CD8-positive, alpha-beta T cell (primary cell): ENCODE measurements at regions of chr10 and their contacts with region 1.

Region 1: GRCh38 chr10:79068562-79069324 is at the start of gene ZMIZ1:
- DNase-seq: peak; percentile 61 to 87 (median 80)
- ATAC-seq: peak; percentile 60
- H3K4me3 ChIP-seq: peak within 1 kb of the TSS; percentile 83 to 94
- H3K4me3 Mint-ChIP-seq: peak within 1 kb of the TSS; percentile 94
- H3K27ac ChIP-seq: peak within 1 kb of the TSS; percentile 36 to 44
- H3K27ac Mint-ChIP-seq: peak within 1 kb of the TSS; percentile 85
- H3K4me1 ChIP-seq: peaks cover 36% of the 10 kb centered on the region
- H3K4me1 Mint-ChIP-seq: peaks cover 48% of the 10 kb centered on the region
- H3K27me3 ChIP-seq: no peaks in the 10 kb centered on the region
- H3K27me3 Mint-ChIP-seq: no peaks in the 10 kb centered on the region
- CTCF ChIP-seq: no peak
- total RNA-seq, gene ZMIZ1: 10.1 to 10.8 TPM

Region 2: DNA sequence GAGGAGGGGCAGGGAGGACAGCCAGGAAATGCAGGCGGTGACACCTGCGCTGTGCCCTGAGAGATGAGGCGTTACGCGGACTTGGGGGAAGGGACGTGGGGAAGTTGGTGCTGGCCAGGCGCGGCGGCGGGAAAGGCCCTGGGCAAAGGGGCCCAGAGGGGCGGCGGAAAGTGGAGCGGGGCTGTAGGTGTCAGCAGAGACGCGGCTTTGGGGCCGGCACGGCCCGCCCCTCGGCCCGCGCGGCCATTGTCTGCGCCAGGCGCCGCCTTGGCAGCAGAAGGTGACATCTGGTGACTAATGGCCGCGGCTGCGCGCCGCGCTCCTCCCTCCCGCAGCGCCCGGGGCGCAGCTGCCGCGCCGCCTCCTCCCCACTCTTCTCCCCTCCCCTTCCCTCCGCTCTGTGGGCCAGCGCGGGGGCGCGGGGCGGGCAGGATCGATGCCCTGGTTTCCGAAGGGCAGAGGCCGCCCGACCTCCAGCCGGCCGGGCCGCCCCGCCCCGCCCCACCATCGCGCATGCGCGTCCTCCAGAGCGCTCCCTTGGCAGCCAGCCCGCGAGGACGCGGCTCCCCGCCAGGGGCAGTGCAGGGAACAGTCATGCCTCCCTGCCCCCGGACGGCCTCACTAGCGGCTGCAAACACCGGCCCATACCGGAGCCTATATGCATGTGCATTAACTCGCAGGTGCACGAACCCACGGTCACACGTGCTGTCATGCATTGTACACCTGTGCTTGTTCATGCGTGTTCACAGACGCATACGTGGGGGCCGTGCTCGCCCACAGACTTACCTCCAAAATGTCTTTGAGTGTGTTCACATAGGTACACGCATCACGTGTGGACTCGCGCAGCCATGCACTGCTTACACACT is 765.5 kb before region 1 on chr10:
- CTCF ChIA-PET with region 1: no interaction called
- POLR2A ChIA-PET with region 1: no interaction called
- intact Hi-C with region 1: loop called (anchors 1 to 2 kb)
- DNase-seq: peak; percentile 94 to 99 (median 96)
- ATAC-seq: peak; percentile 92
- H3K4me3 ChIP-seq: peak overlapping the region; percentile 73 to 82
- H3K4me3 Mint-ChIP-seq: peak overlapping the region; percentile 97
- H3K27ac ChIP-seq: peak overlapping the region; percentile 76 to 92
- H3K27ac Mint-ChIP-seq: peak overlapping the region; percentile 97
- H3K4me1 ChIP-seq: peaks cover 17% of the 10 kb centered on the region
- H3K4me1 Mint-ChIP-seq: peaks cover 20% of the 10 kb centered on the region
- H3K27me3 ChIP-seq: no peaks in the 10 kb centered on the region
- H3K27me3 Mint-ChIP-seq: no peaks in the 10 kb centered on the region
- CTCF ChIP-seq: peak; percentile 79

Region 3: DNA sequence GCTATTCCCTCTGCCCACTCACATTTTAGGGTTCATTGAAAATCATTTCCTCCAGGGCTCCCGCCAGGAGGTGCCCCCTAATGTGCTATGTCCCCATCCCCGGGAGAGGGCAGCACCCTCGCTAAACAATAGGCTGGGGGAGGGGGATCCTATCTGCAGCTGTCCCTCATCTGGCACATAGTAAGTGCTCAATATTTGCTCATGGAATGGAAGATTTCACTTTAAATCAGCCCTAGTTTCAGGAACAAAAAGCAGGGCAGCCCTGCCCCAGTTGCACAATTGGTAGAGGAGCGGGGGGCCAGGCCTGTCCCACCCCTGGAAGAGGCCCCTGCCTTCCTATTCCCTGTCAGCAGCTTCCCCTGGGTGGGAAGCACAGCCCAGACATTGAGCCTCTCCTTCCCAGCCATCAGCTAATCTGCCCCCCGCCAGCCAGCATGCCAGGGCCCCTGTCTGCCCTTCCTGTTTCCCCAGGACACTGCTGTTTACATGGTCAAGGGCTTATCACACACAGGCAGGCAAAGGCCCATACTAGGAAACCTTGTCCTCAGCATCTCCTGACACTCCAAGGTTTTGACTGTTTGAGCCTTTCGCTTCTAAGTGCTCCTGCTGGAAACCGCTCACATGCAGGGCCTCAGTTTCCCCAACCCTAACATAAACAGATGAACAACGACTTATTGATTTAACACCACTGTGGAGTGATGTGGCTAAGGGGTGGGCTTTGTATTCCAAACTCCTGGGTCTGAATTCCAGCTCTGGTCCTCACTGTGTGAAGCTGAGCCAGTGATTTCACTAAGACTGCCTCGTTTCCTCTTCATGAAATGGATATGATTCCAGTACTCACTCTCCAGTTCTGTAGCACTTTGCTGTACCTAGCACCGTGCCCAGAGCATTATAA is 130.7 kb before region 1 on chr10:
- CTCF ChIA-PET with region 1: interaction called, 4 read pairs
- POLR2A ChIA-PET with region 1: no interaction called
- intact Hi-C with region 1: loop called in 1 of 2 experiments (anchors 5 kb)
- DNase-seq: peak in 3 of 9 experiments; percentile 15 to 43 (median 28)
- ATAC-seq: no peak
- H3K4me3 ChIP-seq: no peak overlapping the region
- H3K4me3 Mint-ChIP-seq: no peak overlapping the region
- H3K27ac ChIP-seq: no peak overlapping the region
- H3K27ac Mint-ChIP-seq: no peak overlapping the region
- H3K4me1 ChIP-seq: no peaks in the 10 kb centered on the region
- H3K4me1 Mint-ChIP-seq: no peaks in the 10 kb centered on the region
- H3K27me3 ChIP-seq: no peaks in the 10 kb centered on the region
- H3K27me3 Mint-ChIP-seq: no peaks in the 10 kb centered on the region
- CTCF ChIP-seq: no peak

Region 4: DNA sequence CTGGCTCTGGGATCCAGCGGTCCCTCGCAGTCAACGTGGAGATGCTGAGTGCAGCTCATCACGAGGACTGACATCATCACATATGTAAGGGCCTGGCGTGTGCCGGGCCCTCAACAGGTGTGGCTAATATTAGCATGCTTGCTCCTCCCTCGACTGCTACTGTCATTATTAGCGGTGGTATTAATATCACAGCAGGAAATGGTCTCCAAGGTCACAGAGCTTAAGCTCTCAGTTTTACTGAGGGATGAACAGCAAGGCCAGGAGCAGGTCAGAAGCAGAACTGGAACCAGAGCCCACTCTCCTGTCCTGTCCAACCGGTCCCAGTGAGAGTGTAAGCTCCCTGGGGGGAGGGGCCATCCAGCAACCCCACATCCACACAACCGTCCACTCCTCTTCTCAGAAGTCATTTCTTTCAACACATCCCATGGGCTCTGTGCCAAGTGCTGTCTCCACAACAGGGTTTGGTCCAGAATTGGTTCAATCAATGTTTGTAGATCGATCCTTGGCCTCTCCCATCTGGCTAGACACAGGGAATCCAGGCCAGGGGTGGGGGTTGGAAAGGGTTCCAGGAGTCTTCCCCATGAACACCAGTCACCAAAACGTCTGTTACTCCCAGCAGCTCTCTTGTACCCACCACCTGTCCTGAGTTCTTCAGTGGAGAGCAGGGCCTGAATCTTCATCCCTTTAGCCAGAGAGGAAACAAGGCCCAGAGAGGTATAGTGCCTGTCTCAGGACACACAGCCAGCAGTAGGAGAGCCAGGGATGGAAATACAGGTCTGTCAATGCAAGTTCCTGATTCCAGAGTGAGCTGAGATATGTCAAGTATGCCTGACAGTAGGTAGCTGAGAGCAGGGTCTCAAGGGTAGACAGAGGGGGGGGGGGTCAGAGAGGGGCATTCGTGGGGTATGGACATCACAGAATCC is 45.2 kb before region 1 on chr10:
- CTCF ChIA-PET with region 1: interaction called, 3 read pairs
- POLR2A ChIA-PET with region 1: no interaction called
- intact Hi-C with region 1: loop called (anchors 1 to 2 kb)
- DNase-seq: peak in 1 of 9 experiments; percentile 13
- ATAC-seq: no peak
- H3K4me3 ChIP-seq: no peak overlapping the region
- H3K4me3 Mint-ChIP-seq: no peak overlapping the region
- H3K27ac ChIP-seq: no peak overlapping the region
- H3K27ac Mint-ChIP-seq: no peak overlapping the region
- H3K4me1 ChIP-seq: peaks cover 42% of the 10 kb centered on the region
- H3K4me1 Mint-ChIP-seq: peaks cover 39% of the 10 kb centered on the region
- H3K27me3 ChIP-seq: no peaks in the 10 kb centered on the region
- H3K27me3 Mint-ChIP-seq: no peaks in the 10 kb centered on the region
- CTCF ChIP-seq: no peak

Region 5: GRCh38 chr10:79137826-79138225 is 69.1 kb after region 1 on chr10:
- CTCF ChIA-PET with region 1: no interaction called
- POLR2A ChIA-PET with region 1: no interaction called
- intact Hi-C with region 1: loop called in 1 of 2 experiments (anchors 5 kb)
- DNase-seq: peak; percentile 6 to 73 (median 41)
- ATAC-seq: peak; percentile 50
- H3K4me3 ChIP-seq: peak overlapping the region; percentile 37 to 40
- H3K4me3 Mint-ChIP-seq: peak overlapping the region; percentile 73
- H3K27ac ChIP-seq: peak overlapping the region; percentile 36 to 62
- H3K27ac Mint-ChIP-seq: peak overlapping the region; percentile 89
- H3K4me1 ChIP-seq: peaks cover 41% of the 10 kb centered on the region
- H3K4me1 Mint-ChIP-seq: peaks cover 63% of the 10 kb centered on the region
- H3K27me3 ChIP-seq: no peaks in the 10 kb centered on the region
- H3K27me3 Mint-ChIP-seq: no peaks in the 10 kb centered on the region
- CTCF ChIP-seq: no peak